ENCODE measurements at regions of chr18 and their contacts with region 1.

Region 1: DNA sequence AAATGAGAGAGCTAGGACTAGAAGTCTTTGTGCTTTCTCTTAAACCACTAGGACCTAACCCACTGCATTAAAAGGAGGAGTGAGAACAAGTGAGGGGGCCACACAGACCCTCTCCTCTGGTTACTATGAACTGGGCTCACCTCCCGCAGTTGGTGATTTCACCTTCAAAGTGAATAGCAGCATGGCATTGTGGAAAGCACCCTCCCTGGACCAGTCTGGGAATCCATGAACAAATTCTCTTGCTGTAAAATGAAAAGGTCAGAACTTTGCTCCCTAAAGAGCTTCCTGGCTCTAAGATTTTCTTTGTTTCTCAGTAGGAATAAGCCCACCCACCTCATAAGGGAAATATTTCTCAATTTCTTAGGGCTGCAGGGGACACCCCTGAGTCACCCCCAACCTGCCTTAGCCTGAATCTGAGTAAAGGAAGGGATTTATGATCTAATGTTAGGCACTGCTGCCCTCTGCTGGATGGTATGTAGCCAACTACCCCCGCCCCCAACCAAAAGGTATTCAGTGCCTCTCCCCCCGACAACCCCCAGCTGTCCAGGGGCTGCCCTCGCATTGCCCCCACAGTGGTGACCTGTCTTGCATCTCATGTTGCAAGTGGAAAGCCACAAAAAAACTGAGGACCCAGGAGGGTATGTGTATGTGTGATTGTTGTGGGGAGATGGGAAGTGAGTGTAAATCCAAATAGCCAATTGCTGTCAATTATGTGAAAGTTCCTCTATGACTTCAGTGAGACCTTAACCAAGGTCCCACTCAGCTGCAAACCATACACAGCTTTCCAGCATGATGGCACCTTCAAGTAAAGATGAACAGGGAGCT is 230.9 kb upstream of the SLC14A2 start:
- DNase-seq: peak; percentile 55
- ATAC-seq: peak; percentile 75 to 85

Region 2: GRCh38 chr18:43620936-43621335 is 1763.4 kb before region 1 on chr18:
- intact Hi-C with region 1: loop called (anchors 10 kb)
- DNase-seq: no peak
- ATAC-seq: peak; percentile 41 to 51

Region 3: GRCh38 chr18:44679056-44679905 is 705.1 kb before region 1 on chr18:
- intact Hi-C with region 1: loop called in 1 of 2 experiments (anchors 10 kb)
- DNase-seq: peak; percentile 91
- ATAC-seq: peak; percentile 97

Region 4: GRCh38 chr18:45275367-45276113 is 108.8 kb before region 1 on chr18:
- intact Hi-C with region 1: loop called (anchors 5 to 10 kb)
- DNase-seq: no peak
- ATAC-seq: no peak

Region 5: DNA sequence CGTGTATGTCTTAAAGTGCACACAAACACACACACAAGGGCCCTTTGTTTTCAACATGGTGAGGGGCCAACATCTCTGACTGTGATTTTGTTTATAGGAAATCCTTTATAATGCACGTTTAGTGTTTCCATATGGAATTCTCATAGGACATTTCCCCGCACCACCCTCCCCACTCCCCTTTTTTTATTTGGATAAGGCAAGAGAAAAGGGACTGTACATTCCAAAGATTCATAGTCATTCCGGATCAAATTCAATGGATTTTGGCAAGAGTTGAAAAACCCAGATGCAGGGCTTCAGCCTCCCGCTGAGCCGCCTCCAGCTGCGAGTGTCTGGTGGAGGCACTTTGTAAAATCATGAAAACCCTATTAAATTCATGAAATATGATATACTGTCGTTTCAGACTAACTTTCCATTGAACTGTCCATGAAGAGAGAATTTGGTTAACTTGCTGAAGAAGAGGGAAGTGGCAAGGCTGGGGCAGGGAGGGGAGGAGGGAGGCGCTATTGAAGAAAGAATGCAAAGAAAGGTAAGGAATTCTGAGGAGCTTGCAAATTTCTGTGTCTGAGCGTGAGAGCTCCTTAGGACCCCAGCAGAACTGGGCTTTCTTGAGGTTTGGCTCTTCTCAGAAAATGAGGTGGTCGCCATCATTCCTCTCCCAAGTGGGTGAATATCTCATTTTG is 205.1 kb after region 1 on chr18:
- intact Hi-C with region 1: no loop called
- DNase-seq: no peak
- ATAC-seq: peak; percentile 34 to 68